Aorta (tissue), 5 donors: ENCODE measurements at regions of chr18 and their contacts with region 1.

Region 1: GRCh38 chr18:5975111-5976002 is 80.0 kb upstream of the TMEM200C start:
- DNase-seq: no peak
- ATAC-seq: no peak
- H3K4me3 ChIP-seq: no peak overlapping the region
- H3K27ac ChIP-seq: no peak overlapping the region
- H3K4me1 ChIP-seq: no peaks in the 10 kb centered on the region
- H3K27me3 ChIP-seq: no peaks in the 10 kb centered on the region

Region 2: GRCh38 chr18:6039055-6039454 is 63.7 kb after region 1 on chr18:
- intact Hi-C with region 1: loop called in 1 of 2 experiments (anchors 10 kb)
- DNase-seq: no peak
- ATAC-seq: no peak
- H3K4me3 ChIP-seq: no peak overlapping the region
- H3K27ac ChIP-seq: no peak overlapping the region
- H3K4me1 ChIP-seq: no peaks in the 10 kb centered on the region
- H3K27me3 ChIP-seq: no peaks in the 10 kb centered on the region